Natural killer cell (primary cell): ENCODE measurements at regions of chr1 and their contacts with region 1.

Region 1: DNA sequence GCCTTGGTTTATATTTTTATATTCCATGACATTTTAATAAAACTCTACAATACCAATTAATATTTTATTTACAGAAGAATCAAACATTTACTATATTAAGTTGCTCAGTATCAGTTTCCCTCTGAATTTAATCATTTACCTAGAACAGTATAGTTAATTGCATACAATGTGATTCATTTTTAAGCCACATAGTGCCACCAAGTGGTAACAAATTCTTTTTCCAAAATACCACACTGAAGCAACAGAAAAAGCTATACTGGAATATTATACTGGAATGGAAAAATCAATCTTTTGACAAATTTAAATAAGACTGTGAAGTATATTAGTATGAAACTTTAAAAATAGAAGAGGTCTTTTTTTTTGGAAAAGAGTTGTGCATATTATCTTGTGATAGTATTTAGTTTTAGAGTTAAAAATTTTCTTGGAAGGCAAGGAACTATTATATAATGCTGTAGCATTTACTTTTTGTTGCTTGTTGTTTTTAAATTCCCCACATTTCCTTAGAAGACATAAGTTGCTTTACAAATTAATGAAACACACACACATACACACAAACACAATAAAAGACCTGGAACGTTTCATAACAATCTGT is 57.3 kb downstream of the ZNF644 start:
- DNase-seq: peak in 1 of 2 donors; percentile 42
- ATAC-seq: no peak
- H3K4me3 ChIP-seq: no peak overlapping the region
- H3K4me3 Mint-ChIP-seq: no peak overlapping the region
- H3K27ac ChIP-seq: no peak overlapping the region
- H3K27ac Mint-ChIP-seq: no peak overlapping the region
- H3K4me1 ChIP-seq: peaks cover 2% of the 10 kb centered on the region
- H3K4me1 Mint-ChIP-seq: peaks cover 40 to 44% of the 10 kb centered on the region in 2 donors
- H3K27me3 ChIP-seq: no peaks in the 10 kb centered on the region
- H3K27me3 Mint-ChIP-seq: no peaks in the 10 kb centered on the region
- CTCF ChIP-seq: peak; percentile 33

Region 2: DNA sequence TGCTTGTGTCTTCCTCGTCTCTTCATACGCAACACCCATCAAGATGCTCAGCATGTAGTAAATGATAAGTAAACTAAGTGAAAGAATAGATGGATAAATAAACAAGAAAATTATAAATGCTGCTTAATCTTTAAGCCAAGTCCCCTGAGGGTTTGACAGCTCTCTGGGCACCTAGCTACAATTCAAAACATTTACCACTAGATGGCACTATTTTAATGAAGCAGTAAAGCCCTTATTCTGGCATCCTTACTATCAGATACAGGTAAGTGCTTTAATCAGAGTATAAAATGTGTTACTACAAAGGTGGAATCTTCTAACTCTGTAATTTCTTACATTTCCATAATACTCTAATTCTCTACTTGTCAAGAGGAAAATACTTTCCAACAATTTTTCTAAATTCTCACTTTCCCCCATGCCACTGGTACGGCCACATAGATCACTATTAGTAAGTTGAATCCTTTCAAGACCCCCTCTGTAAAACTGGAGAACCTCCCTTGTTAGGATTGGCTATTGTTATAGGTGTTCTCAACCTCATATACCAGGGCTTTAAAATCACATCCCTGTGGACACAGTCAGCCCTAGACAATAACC is 385.2 kb before region 1 on chr1:
- intact Hi-C with region 1: loop called (anchors 5 kb)
- DNase-seq: peak in 1 of 2 donors; percentile 54
- ATAC-seq: peak in 1 of 3 donors; percentile 68
- H3K4me3 ChIP-seq: no peak overlapping the region
- H3K4me3 Mint-ChIP-seq: no peak overlapping the region
- H3K27ac ChIP-seq: no peak overlapping the region
- H3K27ac Mint-ChIP-seq: no peak overlapping the region
- H3K4me1 ChIP-seq: no peaks in the 10 kb centered on the region
- H3K4me1 Mint-ChIP-seq: no peaks in the 10 kb centered on the region
- H3K27me3 ChIP-seq: no peaks in the 10 kb centered on the region
- H3K27me3 Mint-ChIP-seq: peaks cover 4 to 7% of the 10 kb centered on the region in 2 donors
- CTCF ChIP-seq: peak; percentile 69

Region 3: GRCh38 chr1:90721210-90722194 is 243.0 kb before region 1 on chr1:
- intact Hi-C with region 1: loop called (anchors 5 kb)
- DNase-seq: peak in 1 of 2 donors; percentile 71
- ATAC-seq: peak in 2 of 3 donors; percentile 49 to 61
- H3K4me3 ChIP-seq: no peak overlapping the region
- H3K4me3 Mint-ChIP-seq: peak overlapping the region; percentile 49
- H3K27ac ChIP-seq: no peak overlapping the region
- H3K27ac Mint-ChIP-seq: no peak overlapping the region
- H3K4me1 ChIP-seq: peaks cover 49% of the 10 kb centered on the region
- H3K4me1 Mint-ChIP-seq: peaks cover 39 to 46% of the 10 kb centered on the region in 2 donors
- H3K27me3 ChIP-seq: peaks cover 88% of the 10 kb centered on the region
- H3K27me3 Mint-ChIP-seq: peaks cover 83 to 92% of the 10 kb centered on the region in 2 donors
- CTCF ChIP-seq: peak; percentile 74

Region 4: GRCh38 chr1:90989990-90990389 is 25.4 kb after region 1 on chr1:
- intact Hi-C with region 1: no loop called
- DNase-seq: no peak
- ATAC-seq: no peak
- H3K4me3 ChIP-seq: no peak overlapping the region
- H3K4me3 Mint-ChIP-seq: peak overlapping the region; percentile 51
- H3K27ac ChIP-seq: no peak overlapping the region
- H3K27ac Mint-ChIP-seq: peak overlapping the region; percentile 17 to 58
- H3K4me1 ChIP-seq: peaks cover 2% of the 10 kb centered on the region
- H3K4me1 Mint-ChIP-seq: peaks cover 91 to 93% of the 10 kb centered on the region in 2 donors
- H3K27me3 ChIP-seq: no peaks in the 10 kb centered on the region
- H3K27me3 Mint-ChIP-seq: no peaks in the 10 kb centered on the region
- CTCF ChIP-seq: no peak

Region 5: DNA sequence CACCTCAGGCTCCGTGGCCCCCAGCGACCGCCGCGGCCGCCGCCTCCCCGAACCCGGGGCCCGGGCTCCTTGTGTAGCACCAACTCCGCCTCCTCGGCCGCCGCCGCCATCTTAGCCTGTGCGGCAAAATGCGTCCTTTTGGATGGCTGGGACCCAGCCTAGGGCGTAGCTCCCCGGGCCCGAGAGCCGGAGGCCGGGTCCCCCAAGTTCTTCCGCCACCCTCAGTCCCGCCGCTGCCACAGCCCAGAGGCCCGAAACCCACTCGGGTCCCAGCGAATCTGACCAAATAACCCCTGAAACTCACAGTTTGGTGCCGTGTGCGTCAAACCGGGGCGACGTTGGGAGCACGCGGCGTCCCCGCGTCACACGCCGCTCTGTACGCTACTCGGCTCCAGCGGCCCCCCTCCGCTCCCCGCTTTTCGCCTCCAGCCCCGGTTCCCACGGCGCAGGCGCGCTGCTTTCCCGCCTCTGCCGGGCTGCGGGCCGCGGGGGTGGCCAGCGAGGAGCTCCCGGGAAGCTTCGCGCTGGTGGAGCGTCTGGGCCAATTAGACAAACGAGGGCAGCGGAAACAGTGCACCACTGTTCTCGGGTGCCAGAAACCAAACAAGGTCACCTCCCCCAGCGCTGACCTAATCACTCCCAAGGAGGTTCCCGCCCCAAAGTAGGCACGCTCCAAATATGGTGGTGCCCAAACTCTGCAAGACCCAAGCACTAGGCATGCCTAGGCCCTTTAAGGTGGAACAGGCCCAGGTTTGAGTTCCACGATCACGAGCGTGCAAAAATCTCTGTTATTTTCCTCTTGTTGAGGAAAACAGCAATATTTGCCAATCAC is 57.4 kb after region 1 on chr1 and contains the start of gene ZNF644:
- intact Hi-C with region 1: loop called (anchors 10 kb)
- DNase-seq: peak; percentile 84 to 96
- ATAC-seq: peak; percentile 79 to 91 (median 79)
- H3K4me3 ChIP-seq: peak within 1 kb of the TSS; percentile 99
- H3K4me3 Mint-ChIP-seq: peak within 1 kb of the TSS; percentile 92
- H3K27ac ChIP-seq: peak within 1 kb of the TSS; percentile 100
- H3K27ac Mint-ChIP-seq: peak within 1 kb of the TSS; percentile 94 to 97
- H3K4me1 ChIP-seq: peaks cover 20% of the 10 kb centered on the region
- H3K4me1 Mint-ChIP-seq: peaks cover 39 to 48% of the 10 kb centered on the region in 2 donors
- H3K27me3 ChIP-seq: no peaks in the 10 kb centered on the region
- H3K27me3 Mint-ChIP-seq: no peaks in the 10 kb centered on the region
- CTCF ChIP-seq: no peak
- total RNA-seq, gene ZNF644: 135 to 157 (median 142) TPM